ENCODE measurements at regions of chr19 and their contacts with region 1.

Region 1: DNA sequence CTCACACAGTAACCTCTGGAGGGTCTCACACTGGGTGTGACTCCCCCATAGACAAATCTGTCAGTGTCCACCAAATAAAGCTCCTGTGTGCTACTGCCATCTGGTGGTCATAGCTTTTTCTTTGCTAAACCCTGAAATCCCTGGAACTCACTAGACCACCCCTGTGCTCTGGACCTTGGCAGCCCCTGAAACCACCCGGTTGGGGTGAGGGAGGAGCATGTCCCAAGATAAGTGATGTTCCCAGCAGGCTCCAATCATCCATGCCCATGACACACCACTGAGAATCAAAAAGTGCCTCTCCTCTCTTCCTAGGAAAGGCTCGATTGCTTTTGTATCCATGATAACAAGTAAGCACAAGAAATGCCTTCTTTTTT is 6.5 kb upstream of the HSD17B14 start:
- DNase-seq: peak; percentile 80
- H3K4me3 ChIP-seq: no peak overlapping the region
- H3K27ac ChIP-seq: no peak overlapping the region
- H3K4me1 ChIP-seq: peaks cover 0 to 2% of the 10 kb centered on the region in 2 experiments; a peak in 1 of 4 replicates
- H3K27me3 ChIP-seq: no peaks in the 10 kb centered on the region
- CTCF ChIP-seq: peak; percentile 86
- EP300 ChIP-seq: no peak
- RAD21 ChIP-seq: peak; percentile 75

Region 2: DNA sequence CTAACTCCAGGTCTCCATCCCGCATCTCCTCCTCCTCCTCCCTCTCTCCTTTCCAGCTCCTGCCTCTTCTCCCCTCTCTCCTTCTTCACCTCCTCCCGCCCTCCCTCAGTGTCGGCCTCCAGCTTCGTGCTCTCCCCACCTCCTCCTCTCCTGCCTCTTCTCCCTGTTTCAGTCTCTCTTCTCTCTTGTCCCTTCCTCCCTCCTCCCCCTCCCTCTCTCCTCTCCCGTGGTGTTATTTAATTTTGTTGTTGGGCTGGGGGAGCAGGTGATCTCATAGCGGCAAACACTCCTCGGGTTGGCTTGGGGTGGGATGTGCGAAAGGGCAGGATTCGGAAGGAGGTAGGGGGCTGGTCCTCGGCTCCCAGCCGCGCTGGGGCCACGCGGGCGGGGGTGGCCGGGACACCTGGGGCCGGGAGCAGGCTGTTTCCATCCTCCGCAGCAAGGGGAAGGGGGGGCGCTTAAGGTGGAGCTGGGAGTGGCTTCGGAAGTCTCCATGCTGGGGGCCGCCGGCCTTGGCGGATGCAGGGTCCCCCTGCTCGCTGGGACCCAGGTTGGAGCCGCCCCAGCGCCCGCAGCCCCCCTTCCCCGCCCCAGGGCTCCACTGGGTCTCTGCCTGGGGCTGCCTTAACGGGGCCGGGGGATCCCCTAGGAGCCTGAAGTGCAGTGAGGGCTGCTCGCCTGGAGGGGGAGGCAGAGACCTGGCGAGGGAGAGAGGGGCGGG is 196.6 kb before region 1 on chr19 and contains the start of gene CA11:
- CTCF ChIA-PET with region 1: interaction called, 25 read pairs
- POLR2A ChIA-PET with region 1: no interaction called
- DNase-seq: peak; percentile 96
- H3K4me3 ChIP-seq: peak within 1 kb of the TSS; percentile 43 to 74
- H3K27ac ChIP-seq: peak within 1 kb of the TSS; percentile 54 to 69
- H3K4me1 ChIP-seq: peaks cover 4 to 6% of the 10 kb centered on the region in 2 experiments; a peak in 2 of 4 replicates
- H3K27me3 ChIP-seq: no peaks in the 10 kb centered on the region
- CTCF ChIP-seq: peak; percentile 76
- EP300 ChIP-seq: no peak
- RAD21 ChIP-seq: peak; percentile 90
- polyA plus RNA-seq, gene CA11: 13.1 and 13.5 TPM in 2 replicates

Region 3: GRCh38 chr19:48812094-48812929 is 30.5 kb before region 1 on chr19:
- CTCF ChIA-PET with region 1: interaction called, 16 read pairs
- POLR2A ChIA-PET with region 1: no interaction called
- DNase-seq: peak; percentile 97
- H3K4me3 ChIP-seq: peak overlapping the region; percentile 48 to 59
- H3K27ac ChIP-seq: peak overlapping the region in 1 of 2 experiments; percentile 53; a peak in 2 of 4 replicates
- H3K4me1 ChIP-seq: peaks cover 0 to 12% of the 10 kb centered on the region in 2 experiments; a peak in 2 of 4 replicates
- H3K27me3 ChIP-seq: no peaks in the 10 kb centered on the region
- CTCF ChIP-seq: no peak
- EP300 ChIP-seq: no peak
- RAD21 ChIP-seq: no peak

Region 4: DNA sequence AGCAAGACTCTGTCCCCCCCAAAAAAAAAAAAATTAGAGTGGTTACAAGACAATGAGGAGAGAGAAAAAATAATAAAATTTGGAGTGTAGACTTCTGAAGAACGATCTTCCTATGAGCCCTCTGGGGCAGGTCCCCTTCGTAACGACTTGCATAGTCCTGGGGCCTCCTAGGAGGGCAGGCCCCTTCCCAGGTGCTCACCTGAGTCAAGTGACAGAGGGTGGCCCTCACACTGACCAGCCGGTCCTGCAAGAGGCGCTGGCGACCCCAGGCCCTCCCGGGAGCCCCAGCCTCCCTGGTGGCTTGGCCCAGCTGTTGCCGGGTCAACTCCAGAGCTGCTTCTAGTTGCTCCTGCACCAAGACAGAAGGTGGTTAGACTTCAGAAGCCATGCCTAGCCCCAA is 10.7 kb after region 1 on chr19:
- CTCF ChIA-PET with region 1: interaction called, 37 read pairs
- POLR2A ChIA-PET with region 1: no interaction called
- DNase-seq: no peak
- H3K4me3 ChIP-seq: no peak overlapping the region
- H3K27ac ChIP-seq: no peak overlapping the region
- H3K4me1 ChIP-seq: no peaks in the 10 kb centered on the region
- H3K27me3 ChIP-seq: no peaks in the 10 kb centered on the region
- CTCF ChIP-seq: no peak
- EP300 ChIP-seq: no peak
- RAD21 ChIP-seq: no peak

Region 5: GRCh38 chr19:48899781-48900476 is 57.2 kb after region 1 on chr19 and contains the start of gene NUCB1:
- CTCF ChIA-PET with region 1: no interaction called
- POLR2A ChIA-PET with region 1: no interaction called
- DNase-seq: peak; percentile 98
- H3K4me3 ChIP-seq: peak within 1 kb of the TSS; percentile 85
- H3K27ac ChIP-seq: peak within 1 kb of the TSS; percentile 70 to 90
- H3K4me1 ChIP-seq: peaks cover 0 to 9% of the 10 kb centered on the region in 2 experiments; a peak in 1 of 4 replicates
- H3K27me3 ChIP-seq: no peaks in the 10 kb centered on the region
- CTCF ChIP-seq: peak; percentile 32; the same call in 1 of the 2 replicates
- EP300 ChIP-seq: peak in 1 of 2 experiments; percentile 72; a peak in 1 of 4 replicates
- RAD21 ChIP-seq: 0 out of 2 replicates have a peak, but pooled peaks have one; percentile 12
- polyA plus RNA-seq, gene NUCB1: 259 and 397 TPM in 2 replicates

Region 6: DNA sequence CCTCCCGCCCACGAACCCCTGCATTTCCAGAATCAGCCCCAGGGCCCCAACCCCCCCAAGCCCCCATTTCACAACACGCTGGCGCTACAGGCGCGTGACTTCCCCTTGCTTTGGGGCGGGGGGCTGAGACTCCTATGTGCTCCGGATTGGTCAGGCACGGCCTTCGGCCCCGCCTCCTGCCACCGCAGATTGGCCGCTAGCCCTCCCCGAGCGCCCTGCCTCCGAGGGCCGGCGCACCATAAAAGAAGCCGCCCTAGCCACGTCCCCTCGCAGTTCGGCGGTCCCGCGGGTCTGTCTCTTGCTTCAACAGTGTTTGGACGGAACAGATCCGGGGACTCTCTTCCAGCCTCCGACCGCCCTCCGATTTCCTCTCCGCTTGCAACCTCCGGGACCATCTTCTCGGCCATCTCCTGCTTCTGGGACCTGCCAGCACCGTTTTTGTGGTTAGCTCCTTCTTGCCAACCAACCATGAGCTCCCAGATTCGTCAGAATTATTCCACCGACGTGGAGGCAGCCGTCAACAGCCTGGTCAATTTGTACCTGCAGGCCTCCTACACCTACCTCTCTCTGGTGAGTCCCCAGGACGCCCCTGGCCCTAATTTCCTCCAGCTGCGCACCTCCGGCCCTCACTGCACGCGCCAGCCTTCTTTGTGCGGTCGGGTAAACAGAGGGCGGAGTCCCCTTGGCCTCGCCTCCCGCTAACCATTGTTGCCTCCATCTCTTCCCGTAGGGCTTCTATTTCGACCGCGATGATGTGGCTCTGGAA is 122.4 kb after region 1 on chr19 and contains the start of gene FTL:
- CTCF ChIA-PET with region 1: interaction called, 42 read pairs
- POLR2A ChIA-PET with region 1: no interaction called
- DNase-seq: peak; percentile 99
- H3K4me3 ChIP-seq: peak within 1 kb of the TSS; percentile 68 to 74
- H3K27ac ChIP-seq: peak within 1 kb of the TSS; percentile 70 to 77
- H3K4me1 ChIP-seq: peaks cover 17 to 26% of the 10 kb centered on the region in 2 experiments; a peak in 3 of 4 replicates
- H3K27me3 ChIP-seq: no peaks in the 10 kb centered on the region
- CTCF ChIP-seq: no peak
- EP300 ChIP-seq: 0 out of 4 replicates have a peak, but pooled peaks of 1 of the 2 experiments have one; percentile 5
- RAD21 ChIP-seq: no peak
- polyA plus RNA-seq, gene FTL: 587 and 875 TPM in 2 replicates

Measured in SK-N-SH (cell line).